Cardiac septum (tissue), 1 donor: ENCODE measurements at regions of chr9 and their contacts with region 1.

Region 1: GRCh38 chr9:38160613-38161215 is 91.7 kb upstream of the SHB start:
- DNase-seq: no peak

Region 2: DNA sequence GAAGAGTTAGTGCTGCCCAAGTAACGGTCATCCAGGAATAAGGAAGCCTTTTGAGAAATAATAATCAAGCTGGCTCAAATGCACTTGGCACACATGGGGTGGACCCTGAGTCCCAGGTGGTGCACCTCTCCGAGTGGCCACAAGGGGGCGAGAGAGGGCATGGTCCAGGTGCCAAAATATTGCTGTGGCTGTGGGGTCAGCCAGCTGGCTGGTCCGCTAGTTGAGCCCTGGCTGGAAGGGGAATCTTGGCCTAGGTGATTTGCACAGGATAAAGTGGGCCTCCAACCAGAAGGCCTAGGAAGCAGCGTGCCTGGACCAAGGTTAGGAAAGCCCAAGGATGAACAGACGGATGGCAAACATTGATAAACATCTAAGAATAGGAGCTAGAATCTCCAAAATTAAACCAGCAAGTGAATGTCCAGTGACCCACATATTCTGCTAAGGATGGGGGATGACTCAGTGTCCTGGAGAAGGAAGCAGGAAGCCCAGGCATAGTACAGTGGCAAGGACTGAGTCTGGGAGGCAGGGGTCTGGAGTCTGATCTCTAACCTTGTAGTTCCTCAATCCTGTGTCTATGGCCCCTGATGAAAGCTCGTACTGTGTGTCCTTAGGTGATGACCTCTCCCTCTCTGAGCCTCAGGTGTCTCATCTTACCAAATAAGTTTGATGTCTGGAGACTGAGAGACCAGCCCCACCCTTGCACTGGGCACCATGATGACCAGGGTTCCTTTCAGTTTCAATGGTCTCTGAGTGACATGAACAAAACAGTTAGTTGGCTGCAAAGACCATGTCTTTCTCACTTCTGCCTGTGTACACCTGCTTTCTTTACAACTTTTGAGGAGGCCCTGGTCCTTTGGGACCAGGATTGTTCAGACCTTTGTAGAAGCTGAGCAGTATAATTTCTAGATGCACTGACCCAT is 72.4 kb before region 1 on chr9:
- intact Hi-C with region 1: loop called (anchors 5 kb)
- DNase-seq: peak; percentile 89